ENCODE measurements at regions of chr9 and their contacts with region 1.

Region 1: GRCh38 chr9:77291714-77292113 is 114.4 kb downstream of the VPS13A start:
- DNase-seq: peak; percentile 29 to 42
- ATAC-seq: peak; percentile 70 to 93
- H3K4me3 ChIP-seq: no peak overlapping the region
- H3K27ac ChIP-seq: no peak overlapping the region
- H3K4me1 ChIP-seq: no peaks in the 10 kb centered on the region
- CTCF ChIP-seq: peak; percentile 42
- EP300 ChIP-seq: no peak
- POLR2A ChIP-seq: no peak
- RAD21 ChIP-seq: peak; percentile 22 to 34; a peak in 2 of 5 replicates

Region 2: DNA sequence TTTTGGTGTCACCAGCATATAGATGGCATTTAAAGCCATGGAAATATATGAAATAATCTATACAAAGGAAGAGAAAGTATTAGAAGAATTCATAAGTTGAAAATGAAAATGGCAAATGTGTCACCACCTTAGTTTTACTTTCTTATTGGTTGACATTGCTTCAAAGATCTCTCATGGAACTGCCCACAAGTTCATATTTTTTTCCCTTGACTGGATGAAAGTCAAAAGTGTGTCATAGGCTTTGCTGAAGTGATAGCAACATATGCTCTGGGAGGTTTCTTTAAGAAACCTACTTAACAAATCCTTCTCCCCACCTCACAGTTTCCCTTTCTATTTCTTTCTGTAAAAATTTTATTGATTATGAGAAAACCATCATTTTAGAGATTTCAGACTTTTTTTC is 12.8 kb after region 1 on chr9:
- CTCF ChIA-PET with region 1: interaction called, 10 read pairs
- POLR2A ChIA-PET with region 1: no interaction called
- DNase-seq: no peak
- ATAC-seq: no peak
- H3K4me3 ChIP-seq: no peak overlapping the region
- H3K27ac ChIP-seq: no peak overlapping the region
- H3K4me1 ChIP-seq: no peaks in the 10 kb centered on the region
- CTCF ChIP-seq: no peak
- EP300 ChIP-seq: no peak
- POLR2A ChIP-seq: no peak
- RAD21 ChIP-seq: no peak

Measured in A549 (cell line).